Calu3 (cell line): ENCODE measurements at regions of chr21 and their contacts with region 1.

Region 1: DNA sequence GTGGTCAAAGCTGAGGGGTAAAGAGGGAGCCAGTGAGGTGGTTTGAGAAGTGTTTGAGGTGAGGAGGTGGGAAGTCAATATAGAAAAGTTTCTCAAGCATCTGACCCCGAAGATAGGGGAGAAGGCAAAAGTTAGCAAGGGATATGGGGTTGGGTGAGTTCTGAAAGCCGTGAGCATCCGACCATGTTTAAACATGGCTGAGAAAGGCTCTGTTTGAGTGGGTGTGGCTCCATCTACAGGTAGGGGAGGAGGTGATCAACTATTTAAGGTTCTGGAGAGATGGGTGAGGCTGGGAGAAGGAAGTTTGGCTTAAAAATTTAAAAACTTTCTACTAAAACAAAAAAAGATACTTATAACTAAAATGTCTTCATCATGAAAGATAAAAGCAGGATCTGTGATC is 273.8 kb downstream of the KCNJ6 start:
- DNase-seq: peak; percentile 37
- H3K4me3 Mint-ChIP-seq: no peak overlapping the region
- H3K27ac Mint-ChIP-seq: peak overlapping the region; percentile 30
- H3K4me1 Mint-ChIP-seq: peaks cover 39% of the 10 kb centered on the region
- H3K27me3 Mint-ChIP-seq: no peaks in the 10 kb centered on the region
- CTCF ChIP-seq: no peak

Region 2: GRCh38 chr21:37220981-37221664 is 421.4 kb before region 1 on chr21:
- CTCF ChIA-PET with region 1: no interaction called
- intact Hi-C with region 1: loop called (anchors 2 kb)
- DNase-seq: peak; percentile 92
- H3K4me3 Mint-ChIP-seq: peak overlapping the region; percentile 95
- H3K27ac Mint-ChIP-seq: peak overlapping the region; percentile 91
- H3K4me1 Mint-ChIP-seq: no peaks in the 10 kb centered on the region
- H3K27me3 Mint-ChIP-seq: no peaks in the 10 kb centered on the region
- CTCF ChIP-seq: no peak

Region 3: GRCh38 chr21:37496972-37497371 is 145.5 kb before region 1 on chr21:
- CTCF ChIA-PET with region 1: interaction called, 4 read pairs
- intact Hi-C with region 1: loop called (anchors 2 kb)
- DNase-seq: no peak
- H3K4me3 Mint-ChIP-seq: no peak overlapping the region
- H3K27ac Mint-ChIP-seq: no peak overlapping the region
- H3K4me1 Mint-ChIP-seq: no peaks in the 10 kb centered on the region
- H3K27me3 Mint-ChIP-seq: no peaks in the 10 kb centered on the region
- CTCF ChIP-seq: no peak

Region 4: GRCh38 chr21:37737507-37737906 is 95.0 kb after region 1 on chr21:
- CTCF ChIA-PET with region 1: no interaction called
- intact Hi-C with region 1: no loop called
- DNase-seq: no peak
- H3K4me3 Mint-ChIP-seq: no peak overlapping the region
- H3K27ac Mint-ChIP-seq: no peak overlapping the region
- H3K4me1 Mint-ChIP-seq: no peaks in the 10 kb centered on the region
- H3K27me3 Mint-ChIP-seq: peaks cover 100% of the 10 kb centered on the region
- CTCF ChIP-seq: no peak